ENCODE measurements at regions of chr2 and their contacts with region 1.

Region 1: DNA sequence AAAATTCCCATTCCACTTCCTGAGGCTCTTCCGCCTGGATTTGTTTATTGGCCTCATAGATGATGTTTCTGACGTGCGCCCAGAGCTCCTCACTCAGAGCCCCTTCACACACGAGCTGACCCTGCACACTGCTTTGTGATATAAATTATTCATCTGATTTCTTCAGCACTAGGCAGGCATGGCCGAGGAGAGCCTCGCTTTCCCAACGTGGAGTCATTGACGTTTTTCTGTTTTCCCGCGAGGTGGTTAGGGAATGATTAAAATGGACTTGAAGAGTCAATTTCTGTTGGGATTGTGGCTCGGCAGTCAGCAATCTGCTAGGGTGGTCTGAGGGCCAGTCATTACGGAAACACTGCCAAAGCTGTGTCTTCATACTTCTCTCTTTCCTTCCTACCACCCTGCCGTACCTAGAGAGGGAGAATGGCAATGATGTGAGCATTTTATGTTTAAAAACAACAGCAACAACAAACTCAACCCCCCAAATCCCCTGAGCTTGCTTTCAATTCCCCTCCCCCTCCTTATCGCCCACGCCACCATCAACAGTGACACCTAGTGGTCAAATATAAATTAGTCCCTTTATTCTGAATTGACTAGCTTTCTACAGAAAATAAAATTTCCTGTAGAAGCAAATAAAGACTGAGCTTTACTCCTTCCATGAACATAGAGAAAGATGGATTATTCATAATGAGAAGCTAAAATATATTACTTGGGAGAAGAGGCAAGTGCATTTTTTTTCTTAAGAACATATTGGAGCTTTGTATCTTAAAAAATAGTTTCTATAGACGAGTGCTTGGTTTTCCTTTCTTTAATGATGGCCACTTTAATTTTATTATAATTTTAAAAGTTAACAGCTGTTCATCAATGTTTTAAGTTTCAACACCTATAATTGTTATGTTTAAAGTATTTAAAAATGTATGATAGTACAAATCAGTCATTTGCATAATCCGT is 285.1 kb downstream of the MTX2 start:
- DNase-seq: peak in 1 of 2 experiments; percentile 55
- H3K4me3 ChIP-seq: peak overlapping the region in 3 of 4 experiments; percentile 20 to 51 (median 43); a peak in 5 of 8 replicates
- H3K27ac ChIP-seq: no peak overlapping the region
- H3K4me1 ChIP-seq: no peaks in the 10 kb centered on the region; a peak in 2 of 7 replicates
- H3K27me3 ChIP-seq: peaks cover 0 to 11% (median 8%) of the 10 kb centered on the region in 4 experiments; a peak in 6 of 7 replicates
- CTCF ChIP-seq: peak; percentile 13 to 64 (median 62)
- EP300 ChIP-seq: no peak
- POLR2A ChIP-seq: no peak
- RAD21 ChIP-seq: peak; percentile 75 to 84

Region 2: GRCh38 chr2:176525086-176525485 is 29.3 kb before region 1 on chr2:
- CTCF ChIA-PET with region 1: interaction called, 12 read pairs
- POLR2A ChIA-PET with region 1: no interaction called
- DNase-seq: no peak
- H3K4me3 ChIP-seq: no peak overlapping the region
- H3K27ac ChIP-seq: no peak overlapping the region
- H3K4me1 ChIP-seq: no peaks in the 10 kb centered on the region
- H3K27me3 ChIP-seq: peaks cover 4 to 15% (median 11%) of the 10 kb centered on the region in 4 experiments
- CTCF ChIP-seq: no peak
- EP300 ChIP-seq: no peak
- POLR2A ChIP-seq: no peak
- RAD21 ChIP-seq: no peak

Region 3: DNA sequence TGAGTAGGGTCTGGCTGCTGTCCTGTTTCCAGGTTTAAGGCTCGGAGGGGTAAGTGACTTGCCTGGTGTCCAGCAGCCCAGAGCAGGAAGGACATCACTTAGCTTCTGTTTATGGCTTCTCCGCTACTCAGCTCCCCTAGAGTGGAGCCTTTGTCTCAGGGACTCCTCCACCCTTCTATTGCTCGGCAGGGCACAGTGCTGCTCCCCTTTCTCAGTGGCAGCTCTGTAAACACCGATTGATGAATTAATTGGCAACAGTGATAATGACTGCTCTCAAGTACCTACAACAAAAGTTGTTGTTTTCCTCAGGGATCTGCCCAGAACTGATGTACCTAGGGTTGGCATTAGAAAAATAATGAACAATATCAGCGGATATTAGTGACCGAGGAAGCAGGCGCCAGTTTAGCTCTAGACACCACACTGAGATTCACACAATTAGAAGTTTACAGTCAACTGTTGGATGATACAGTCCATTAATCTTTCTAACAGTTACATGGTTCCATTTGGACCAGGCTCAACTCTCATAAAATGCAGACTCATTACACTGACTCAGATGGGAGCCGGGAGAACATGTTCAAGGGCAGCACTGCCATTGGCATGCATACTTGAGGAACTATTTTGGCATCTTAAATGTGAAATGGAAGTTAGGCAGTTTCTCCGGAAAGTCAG is 19.4 kb before region 1 on chr2:
- CTCF ChIA-PET with region 1: interaction called, 29 read pairs
- POLR2A ChIA-PET with region 1: no interaction called
- DNase-seq: no peak
- H3K4me3 ChIP-seq: no peak overlapping the region
- H3K27ac ChIP-seq: no peak overlapping the region
- H3K4me1 ChIP-seq: peaks cover 0 to 2% (median 0%) of the 10 kb centered on the region in 4 experiments; a peak in 2 of 7 replicates
- H3K27me3 ChIP-seq: peaks cover 0 to 1% (median 0%) of the 10 kb centered on the region in 4 experiments; a peak in 1 of 7 replicates
- CTCF ChIP-seq: no peak
- EP300 ChIP-seq: no peak
- POLR2A ChIP-seq: no peak
- RAD21 ChIP-seq: no peak